Naive thymus-derived CD4-positive, alpha-beta T cell (primary cell): ENCODE measurements at regions of chr3 and their contacts with region 1.

Region 1: GRCh38 chr3:171257251-171258203 is 202.7 kb downstream of the TNIK start:
- DNase-seq: peak in 3 of 9 donors; percentile 13 to 36 (median 33)
- ATAC-seq: peak; percentile 45
- H3K4me3 ChIP-seq: no peak overlapping the region
- H3K4me3 Mint-ChIP-seq: peak overlapping the region; percentile 16 to 70 (median 59)
- H3K27ac ChIP-seq: peak overlapping the region; percentile 70
- H3K27ac Mint-ChIP-seq: peak overlapping the region in 8 of 9 donors; percentile 91 to 99 (median 94)
- H3K4me1 ChIP-seq: peaks cover 53 to 70% of the 10 kb centered on the region in 2 donors
- H3K4me1 Mint-ChIP-seq: peaks cover 59 to 100% (median 93%) of the 10 kb centered on the region in 7 donors
- H3K27me3 ChIP-seq: no peaks in the 10 kb centered on the region
- H3K27me3 Mint-ChIP-seq: no peaks in the 10 kb centered on the region

Region 2: GRCh38 chr3:169772897-169773828 is 1484.4 kb before region 1 on chr3 and contains the start of gene MYNN:
- CTCF ChIA-PET with region 1: no interaction called
- POLR2A ChIA-PET with region 1: no interaction called
- intact Hi-C with region 1: loop called in 1 of 2 experiments (anchors 10 kb)
- DNase-seq: peak; percentile 87 to 95 (median 93)
- ATAC-seq: peak; percentile 90
- H3K4me3 ChIP-seq: peak within 1 kb of the TSS; percentile 87
- H3K4me3 Mint-ChIP-seq: peak within 1 kb of the TSS; percentile 91 to 99 (median 97)
- H3K27ac ChIP-seq: peak within 1 kb of the TSS; percentile 100
- H3K27ac Mint-ChIP-seq: peak within 1 kb of the TSS; percentile 96 to 100 (median 99)
- H3K4me1 ChIP-seq: peaks cover 15 to 22% of the 10 kb centered on the region in 2 donors
- H3K4me1 Mint-ChIP-seq: peaks cover 18 to 69% (median 56%) of the 10 kb centered on the region in 7 donors
- H3K27me3 ChIP-seq: no peaks in the 10 kb centered on the region
- H3K27me3 Mint-ChIP-seq: peaks cover 0 to 5% (median 0%) of the 10 kb centered on the region in 5 donors
- total RNA-seq, gene MYNN: 16.2 to 20.8 (median 19.0) TPM

Region 3: DNA sequence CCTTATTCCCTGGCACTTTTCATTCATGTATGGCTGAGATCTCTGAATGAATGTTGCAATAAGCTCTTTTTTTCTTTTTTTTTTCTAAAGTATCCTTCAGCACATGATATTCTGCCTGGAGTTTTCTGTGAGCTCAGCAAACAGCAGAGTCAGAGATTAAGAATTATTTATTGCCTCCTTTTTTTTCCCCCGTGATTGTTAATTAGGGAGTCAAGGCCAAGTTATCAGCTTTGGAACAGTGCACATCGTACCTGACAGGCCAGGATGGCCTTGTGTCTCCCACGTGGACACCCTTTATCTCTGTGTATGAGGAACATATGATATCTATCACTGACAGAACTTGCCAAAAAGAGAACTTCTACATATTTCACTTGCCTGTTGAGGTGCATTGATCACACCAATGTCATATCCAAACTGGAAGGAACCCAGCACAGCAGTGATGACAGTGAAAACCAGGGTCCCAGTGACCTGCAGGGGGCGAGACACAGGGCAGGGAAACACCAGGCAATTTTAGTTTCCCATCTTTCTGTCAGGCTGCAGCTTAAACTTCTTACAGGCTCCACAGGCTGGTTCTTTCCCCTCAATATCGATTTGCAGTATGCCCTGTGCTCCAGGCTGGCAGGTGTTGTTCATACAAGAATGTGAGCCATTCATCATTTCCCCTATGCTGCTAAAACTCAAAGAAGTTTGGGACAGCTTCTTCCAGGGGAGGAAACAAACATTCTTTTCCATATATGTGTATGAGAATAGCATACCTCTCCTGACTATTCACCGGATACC is 239.2 kb before region 1 on chr3:
- CTCF ChIA-PET with region 1: no interaction called
- POLR2A ChIA-PET with region 1: no interaction called
- intact Hi-C with region 1: no loop called
- DNase-seq: no peak
- ATAC-seq: no peak
- H3K4me3 ChIP-seq: no peak overlapping the region
- H3K4me3 Mint-ChIP-seq: no peak overlapping the region
- H3K27ac ChIP-seq: no peak overlapping the region
- H3K27ac Mint-ChIP-seq: no peak overlapping the region
- H3K4me1 ChIP-seq: no peaks in the 10 kb centered on the region
- H3K4me1 Mint-ChIP-seq: peaks cover 0 to 2% (median 0%) of the 10 kb centered on the region in 7 donors
- H3K27me3 ChIP-seq: no peaks in the 10 kb centered on the region
- H3K27me3 Mint-ChIP-seq: peaks cover 10 to 37% (median 24%) of the 10 kb centered on the region in 5 donors

Region 4: DNA sequence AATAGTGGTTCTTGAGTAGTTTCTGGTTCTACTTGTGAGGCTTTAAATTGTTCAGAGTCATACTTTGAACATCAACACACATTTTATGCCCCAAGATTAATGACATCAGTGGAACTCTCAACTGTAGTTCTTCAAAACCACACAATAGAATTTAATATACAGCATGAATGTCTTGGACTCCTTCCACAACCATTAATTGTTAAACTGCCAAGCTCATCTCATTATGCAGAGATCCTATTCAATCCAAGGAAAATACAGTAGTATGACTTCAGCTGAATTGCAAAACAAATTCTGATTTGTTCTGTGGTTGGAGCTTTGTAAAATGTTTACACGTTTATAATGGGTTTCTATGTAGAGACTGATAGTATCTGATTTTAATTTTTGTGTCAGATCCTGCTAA is 31.8 kb before region 1 on chr3:
- CTCF ChIA-PET with region 1: interaction called, 3 read pairs
- POLR2A ChIA-PET with region 1: no interaction called
- intact Hi-C with region 1: loop called in 1 of 2 experiments (anchors 1 kb)
- DNase-seq: no peak
- ATAC-seq: no peak
- H3K4me3 ChIP-seq: no peak overlapping the region
- H3K4me3 Mint-ChIP-seq: peak overlapping the region in 2 of 10 donors; percentile 41 to 48
- H3K27ac ChIP-seq: no peak overlapping the region
- H3K27ac Mint-ChIP-seq: peak overlapping the region in 6 of 9 donors; percentile 21 to 73 (median 56)
- H3K4me1 ChIP-seq: peaks cover 6 to 11% of the 10 kb centered on the region in 2 donors
- H3K4me1 Mint-ChIP-seq: peaks cover 3 to 72% (median 60%) of the 10 kb centered on the region in 7 donors
- H3K27me3 ChIP-seq: no peaks in the 10 kb centered on the region
- H3K27me3 Mint-ChIP-seq: no peaks in the 10 kb centered on the region

Region 5: GRCh38 chr3:171269542-171269941 is 12.0 kb after region 1 on chr3:
- CTCF ChIA-PET with region 1: interaction called, 8 read pairs
- POLR2A ChIA-PET with region 1: interaction called, 99 read pairs
- intact Hi-C with region 1: loop called (anchors 1 kb)
- DNase-seq: peak in 3 of 9 donors; percentile 34 to 50 (median 44)
- ATAC-seq: peak; percentile 76
- H3K4me3 ChIP-seq: peak overlapping the region; percentile 3
- H3K4me3 Mint-ChIP-seq: peak overlapping the region; percentile 13 to 85 (median 60)
- H3K27ac ChIP-seq: peak overlapping the region; percentile 52
- H3K27ac Mint-ChIP-seq: peak overlapping the region in 8 of 9 donors; percentile 65 to 93 (median 84)
- H3K4me1 ChIP-seq: peaks cover 32 to 44% of the 10 kb centered on the region in 2 donors
- H3K4me1 Mint-ChIP-seq: peaks cover 43 to 95% (median 88%) of the 10 kb centered on the region in 7 donors
- H3K27me3 ChIP-seq: no peaks in the 10 kb centered on the region
- H3K27me3 Mint-ChIP-seq: no peaks in the 10 kb centered on the region

Region 6: DNA sequence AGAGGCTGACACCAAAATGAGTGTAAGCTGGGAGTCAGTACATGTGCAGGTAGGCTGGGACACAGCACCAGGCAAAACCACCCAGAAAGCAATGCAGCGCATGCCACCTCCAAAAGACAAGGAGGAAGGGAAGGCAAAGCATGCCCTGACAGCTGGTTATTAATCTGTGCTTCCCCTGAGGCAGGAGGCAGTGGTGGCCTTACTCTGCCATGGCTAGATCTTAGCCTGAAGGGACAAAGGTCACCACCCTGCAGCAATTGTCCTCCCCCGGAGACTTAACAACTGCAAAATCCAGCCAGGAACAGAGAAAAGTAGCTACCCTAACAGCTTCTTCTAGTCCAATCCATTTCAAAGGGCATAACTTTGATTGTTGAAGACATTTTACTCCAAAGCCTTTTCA is 479.0 kb after region 1 on chr3:
- CTCF ChIA-PET with region 1: no interaction called
- POLR2A ChIA-PET with region 1: no interaction called
- intact Hi-C with region 1: no loop called
- DNase-seq: no peak
- ATAC-seq: no peak
- H3K4me3 ChIP-seq: no peak overlapping the region
- H3K4me3 Mint-ChIP-seq: no peak overlapping the region
- H3K27ac ChIP-seq: no peak overlapping the region
- H3K27ac Mint-ChIP-seq: no peak overlapping the region
- H3K4me1 ChIP-seq: no peaks in the 10 kb centered on the region
- H3K4me1 Mint-ChIP-seq: no peaks in the 10 kb centered on the region
- H3K27me3 ChIP-seq: no peaks in the 10 kb centered on the region
- H3K27me3 Mint-ChIP-seq: peaks cover 0 to 20% (median 0%) of the 10 kb centered on the region in 5 donors